ENCODE measurements at regions of chr13 and their contacts with region 1.

Region 1: DNA sequence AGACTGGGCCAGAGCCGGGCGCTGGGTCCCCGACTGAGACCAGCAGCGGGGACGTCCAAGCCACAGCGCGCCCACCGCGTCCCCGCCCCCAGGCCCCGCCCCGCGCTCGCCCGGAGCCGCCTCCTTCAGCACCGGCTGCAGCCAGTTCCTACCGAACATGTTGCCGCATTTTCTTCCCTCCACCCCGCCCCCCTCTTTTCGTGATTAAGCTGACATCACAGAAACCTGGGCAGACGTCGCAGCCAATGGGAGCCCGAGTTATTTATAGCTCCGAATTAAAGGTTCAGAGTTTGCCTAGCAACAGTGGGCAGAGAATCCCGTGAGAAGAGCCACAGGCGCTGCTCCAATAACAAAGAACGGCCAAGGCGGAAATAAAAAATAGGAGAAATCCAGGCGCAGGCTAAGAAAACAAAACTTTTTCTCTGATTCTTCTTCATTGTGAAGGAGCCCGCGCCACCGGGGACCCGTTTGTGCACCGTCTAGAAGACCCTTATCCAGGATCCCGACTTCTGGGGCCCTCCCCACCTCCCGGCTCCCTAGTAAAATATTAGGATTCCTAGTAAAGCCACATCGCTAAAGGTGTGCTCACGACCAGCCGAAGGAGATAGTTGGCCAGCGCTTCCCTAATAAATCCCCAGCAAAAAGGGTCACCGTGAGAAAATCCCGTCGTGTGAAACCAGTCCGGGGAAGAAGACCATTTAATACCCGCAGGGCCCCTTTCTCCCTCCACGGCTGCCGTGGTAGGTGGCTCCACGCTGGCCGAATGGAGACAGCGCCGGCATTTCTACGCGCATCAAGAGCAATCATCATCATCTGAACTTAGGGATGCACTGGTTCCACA is 61.7 kb downstream of the SERP2 start:
- DNase-seq: peak; percentile 97
- H3K4me3 ChIP-seq: peak overlapping the region; percentile 79
- H3K27ac ChIP-seq: peak overlapping the region; percentile 89
- H3K27me3 ChIP-seq: no peaks in the 10 kb centered on the region
- CTCF ChIP-seq: no peak

Region 2: DNA sequence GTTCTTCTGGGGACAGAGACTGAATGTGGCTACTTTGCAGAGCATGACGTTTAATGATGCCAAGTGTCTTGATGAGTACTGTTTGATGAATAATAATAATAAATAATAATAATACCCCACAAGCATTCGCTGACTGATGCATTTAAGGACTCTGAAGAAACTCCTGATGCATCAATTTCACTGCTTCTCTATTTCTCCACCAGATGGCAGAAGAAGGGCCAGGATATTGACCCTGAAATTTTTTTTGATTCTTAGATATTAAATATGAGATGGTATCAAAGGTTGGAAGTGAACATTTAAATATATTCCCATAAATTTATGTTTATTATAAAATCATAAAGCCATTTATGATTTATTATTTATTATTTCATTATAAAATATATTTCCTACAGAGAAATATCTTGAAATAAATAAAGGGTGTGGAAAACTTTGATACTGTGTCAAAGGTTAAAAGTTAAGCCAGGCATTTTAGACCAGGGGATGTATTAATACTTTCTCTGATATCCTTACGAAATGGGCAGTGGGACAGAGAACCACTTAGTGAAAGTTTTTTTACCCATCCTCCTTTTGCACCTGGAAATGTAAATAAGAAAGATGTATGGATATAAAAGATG is 384.8 kb before region 1 on chr13:
- CTCF ChIA-PET with region 1: interaction called, 18 read pairs
- POLR2A ChIA-PET with region 1: interaction called, 10 read pairs
- DNase-seq: no peak
- H3K4me3 ChIP-seq: no peak overlapping the region
- H3K27ac ChIP-seq: no peak overlapping the region
- H3K27me3 ChIP-seq: peaks cover 6% of the 10 kb centered on the region
- CTCF ChIP-seq: peak; percentile 80

Region 3: GRCh38 chr13:44141725-44142539 is 293.4 kb before region 1 on chr13:
- CTCF ChIA-PET with region 1: no interaction called
- POLR2A ChIA-PET with region 1: interaction called, 17 read pairs
- DNase-seq: peak; percentile 86
- H3K4me3 ChIP-seq: peak overlapping the region; percentile 72
- H3K27ac ChIP-seq: peak overlapping the region; percentile 82
- H3K27me3 ChIP-seq: no peaks in the 10 kb centered on the region
- CTCF ChIP-seq: no peak

Region 4: GRCh38 chr13:44191504-44192171 is 243.7 kb before region 1 on chr13:
- CTCF ChIA-PET with region 1: interaction called, 13 read pairs
- POLR2A ChIA-PET with region 1: interaction called, 3 read pairs
- DNase-seq: no peak
- H3K4me3 ChIP-seq: no peak overlapping the region
- H3K27ac ChIP-seq: no peak overlapping the region
- H3K27me3 ChIP-seq: no peaks in the 10 kb centered on the region
- CTCF ChIP-seq: peak; percentile 76

Measured in AG04450 (cell line).